Tibial artery (tissue), 4 donors: ENCODE measurements at regions of chr11 and their contacts with region 1.

Region 1: DNA sequence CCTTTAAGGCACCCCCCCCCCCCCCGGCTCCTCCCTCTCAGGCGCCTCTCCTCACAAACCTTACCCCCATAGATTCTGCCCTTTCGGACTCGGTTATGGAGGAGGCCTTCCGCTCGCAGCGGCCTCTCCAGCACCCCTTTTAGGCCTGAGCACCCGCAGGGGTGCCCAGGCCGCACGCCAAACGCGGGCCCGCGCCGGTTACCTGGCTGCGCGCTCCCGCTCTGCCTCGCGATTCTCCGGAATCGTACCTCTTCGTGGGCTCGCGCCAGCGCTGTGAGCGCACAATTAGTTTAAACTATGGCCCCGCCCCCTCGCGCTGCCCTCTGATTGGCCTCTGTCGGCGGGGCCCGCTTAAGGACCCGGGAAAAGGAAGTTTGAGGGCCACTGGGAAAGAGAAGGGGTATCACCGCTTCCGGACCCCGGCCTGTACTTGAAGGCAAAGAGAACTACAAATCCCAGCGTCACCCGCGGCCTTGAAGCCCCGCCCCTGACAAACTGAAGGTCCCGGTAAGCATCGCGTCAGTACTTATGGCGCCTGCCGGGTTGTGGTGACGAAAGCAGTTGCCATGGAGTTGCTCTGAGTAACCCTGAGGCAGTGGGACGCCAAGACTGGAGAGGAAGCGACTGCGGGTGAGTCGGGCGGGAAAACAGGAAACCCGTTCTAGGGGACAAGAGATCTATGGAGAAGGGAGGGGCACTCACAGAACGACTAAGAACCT is at the starts of genes LRRC51 and NUMA1:
- DNase-seq: peak; percentile 100
- H3K4me3 ChIP-seq: peak within 1 kb of the TSS; percentile 64 to 94
- H3K27ac ChIP-seq: peak within 1 kb of the TSS; percentile 86 to 97
- H3K4me1 ChIP-seq: peaks cover 0 to 24% (median 14%) of the 10 kb centered on the region in 4 donors
- H3K27me3 ChIP-seq: no peaks in the 10 kb centered on the region
- CTCF ChIP-seq: no peak

Region 2: DNA sequence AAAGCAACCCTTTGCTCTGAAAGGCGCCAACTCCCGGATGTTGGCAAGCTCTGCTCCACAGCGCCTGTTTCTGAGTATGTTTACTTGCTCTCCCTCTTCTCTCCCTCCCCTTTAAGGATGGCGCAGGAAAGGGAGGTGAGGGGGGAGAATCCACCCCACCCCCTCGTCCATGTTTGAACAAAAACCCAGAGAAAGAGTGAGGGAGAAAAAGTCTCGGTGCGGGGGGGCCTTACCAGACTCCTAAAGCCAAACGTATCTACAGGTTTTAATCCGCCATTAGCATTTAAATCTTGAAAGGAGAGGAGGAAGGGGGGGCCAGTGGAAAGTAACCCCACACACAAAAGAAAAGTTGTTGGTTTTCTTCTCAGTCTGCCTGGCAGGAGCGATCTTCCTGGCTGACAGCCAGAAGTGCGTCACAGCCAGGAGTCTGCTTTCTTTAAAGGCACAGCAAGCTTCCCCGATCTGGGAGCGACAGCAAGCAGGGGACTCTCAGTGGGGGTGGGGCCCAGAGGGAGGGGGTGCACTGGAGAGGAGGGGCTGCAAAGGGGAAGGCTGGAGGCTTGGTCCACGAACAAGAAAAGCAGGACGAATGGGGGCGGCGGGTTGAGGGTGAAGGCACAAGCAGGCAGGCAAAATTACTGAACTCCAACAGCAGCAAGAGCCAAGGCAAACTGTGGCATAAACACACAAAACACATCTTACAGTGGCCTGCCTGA is 39.5 kb before region 1 on chr11:
- intact Hi-C with region 1: loop called (anchors 2 kb)
- DNase-seq: peak; percentile 97 to 98
- H3K4me3 ChIP-seq: peak overlapping the region; percentile 54 to 55
- H3K27ac ChIP-seq: peak overlapping the region; percentile 86 to 92
- H3K4me1 ChIP-seq: peaks cover 0 to 62% (median 44%) of the 10 kb centered on the region in 4 donors
- H3K27me3 ChIP-seq: no peaks in the 10 kb centered on the region
- CTCF ChIP-seq: no peak

Region 3: DNA sequence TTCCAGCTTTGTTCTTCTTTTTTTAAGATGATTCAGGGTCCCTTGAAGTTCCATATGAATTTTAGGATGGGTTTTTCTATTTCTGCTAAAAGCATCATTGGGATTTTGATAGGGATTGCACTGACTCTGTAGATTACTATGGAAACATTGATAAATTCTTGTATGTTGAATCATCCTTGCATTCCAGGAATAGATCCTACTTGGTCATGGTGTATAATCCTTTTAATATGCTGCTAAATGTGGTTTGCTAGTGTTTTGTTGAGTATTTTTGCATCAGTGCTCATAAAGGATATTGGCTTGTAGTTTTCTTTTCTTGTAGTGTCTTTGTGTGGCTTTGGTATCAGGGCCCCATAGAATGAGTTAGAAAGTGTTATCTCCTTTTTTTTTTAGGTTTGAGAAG is 198.5 kb after region 1 on chr11:
- intact Hi-C with region 1: no loop called
- DNase-seq: no peak
- H3K4me3 ChIP-seq: no peak overlapping the region
- H3K27ac ChIP-seq: no peak overlapping the region
- H3K4me1 ChIP-seq: no peaks in the 10 kb centered on the region
- H3K27me3 ChIP-seq: no peaks in the 10 kb centered on the region
- CTCF ChIP-seq: no peak